ENCODE measurements at regions of chr1 and their contacts with region 1.

Region 1: GRCh38 chr1:226062558-226063223 is at the start of gene H3-3A:
- DNase-seq: peak; percentile 97
- H3K4me3 Mint-ChIP-seq: peak within 1 kb of the TSS; percentile 100
- H3K27ac Mint-ChIP-seq: peak within 1 kb of the TSS; percentile 100
- H3K4me1 Mint-ChIP-seq: peaks cover 36% of the 10 kb centered on the region
- H3K27me3 Mint-ChIP-seq: no peaks in the 10 kb centered on the region
- total RNA-seq, gene H3-3A: 416 and 426 TPM in 2 replicates

Region 2: GRCh38 chr1:224903951-224904350 is 1158.7 kb before region 1 on chr1:
- intact Hi-C with region 1: no loop called
- DNase-seq: no peak
- H3K4me3 Mint-ChIP-seq: no peak overlapping the region
- H3K27ac Mint-ChIP-seq: no peak overlapping the region
- H3K4me1 Mint-ChIP-seq: no peaks in the 10 kb centered on the region
- H3K27me3 Mint-ChIP-seq: peaks cover 9% of the 10 kb centered on the region

Region 3: DNA sequence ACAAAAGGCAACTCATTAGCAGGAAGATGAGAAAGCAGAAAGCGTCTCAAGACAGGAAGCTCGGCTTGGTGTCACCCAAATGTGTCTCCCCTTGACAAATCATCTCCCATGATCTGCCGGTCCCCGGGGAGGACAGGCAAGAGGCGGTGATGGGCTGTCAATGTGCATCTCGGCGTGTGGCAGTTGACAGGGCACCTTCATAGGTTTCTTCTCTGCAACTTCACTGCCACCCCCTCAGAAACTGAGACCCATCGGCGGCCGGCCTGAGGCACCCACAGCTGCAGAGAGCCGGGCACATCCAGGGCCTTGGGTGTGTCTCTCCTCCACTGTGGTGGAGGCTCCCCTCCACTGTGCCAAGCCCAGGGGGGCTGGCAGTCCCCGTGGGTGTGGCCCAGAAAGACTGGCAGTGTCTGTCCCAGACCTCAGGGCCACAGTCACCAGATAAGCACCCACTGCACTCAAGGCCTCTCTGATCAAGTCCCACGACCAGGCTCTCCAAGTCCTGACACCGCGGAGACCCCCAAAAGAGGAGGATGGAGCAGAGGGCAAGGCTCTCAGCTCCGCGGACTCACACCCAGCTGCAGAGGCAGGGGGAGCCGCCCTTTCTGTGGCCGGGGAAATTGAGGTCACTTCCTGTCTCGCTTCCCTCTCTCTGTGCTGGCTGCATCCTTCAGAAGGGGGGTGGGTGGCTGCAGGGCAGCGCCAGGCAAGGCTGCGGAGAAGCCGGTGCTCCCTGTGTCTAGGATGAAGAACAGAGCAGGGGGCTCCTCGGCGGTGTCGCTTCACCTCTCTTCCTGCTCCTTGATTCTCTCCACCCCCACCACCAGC is 595.3 kb before region 1 on chr1:
- intact Hi-C with region 1: loop called (anchors 2 kb)
- DNase-seq: peak; percentile 80
- H3K4me3 Mint-ChIP-seq: peak overlapping the region; percentile 92
- H3K27ac Mint-ChIP-seq: peak overlapping the region; percentile 95
- H3K4me1 Mint-ChIP-seq: peaks cover 45% of the 10 kb centered on the region
- H3K27me3 Mint-ChIP-seq: no peaks in the 10 kb centered on the region

Region 4: DNA sequence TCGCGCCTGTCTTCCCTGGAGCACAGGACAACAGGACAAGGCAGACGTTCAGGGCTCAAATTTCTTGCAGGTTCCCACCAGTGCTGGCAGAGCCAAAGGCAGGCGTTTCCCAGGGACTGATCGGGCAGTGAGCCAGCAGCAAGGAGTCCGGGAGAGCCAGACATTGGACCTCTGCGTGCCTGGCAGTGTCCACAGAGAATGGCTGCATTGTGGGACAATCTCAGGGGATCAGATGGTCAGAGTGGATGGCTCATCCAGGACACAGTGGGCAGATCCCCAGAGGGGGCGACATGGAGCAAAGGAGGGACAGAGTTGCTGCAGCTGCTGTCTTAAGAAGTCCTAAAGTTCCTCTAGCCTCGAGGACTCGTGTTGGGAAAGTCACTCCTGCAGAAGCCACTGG is 185.1 kb before region 1 on chr1:
- intact Hi-C with region 1: no loop called
- DNase-seq: no peak
- H3K4me3 Mint-ChIP-seq: peak overlapping the region; percentile 55
- H3K27ac Mint-ChIP-seq: no peak overlapping the region
- H3K4me1 Mint-ChIP-seq: peaks cover 45% of the 10 kb centered on the region
- H3K27me3 Mint-ChIP-seq: no peaks in the 10 kb centered on the region

Region 5: GRCh38 chr1:225999227-225999911 is 63.3 kb before region 1 on chr1 and contains the start of gene SDE2:
- intact Hi-C with region 1: loop called (anchors 1 kb)
- DNase-seq: peak; percentile 99
- H3K4me3 Mint-ChIP-seq: peak within 1 kb of the TSS; percentile 100
- H3K27ac Mint-ChIP-seq: peak within 1 kb of the TSS; percentile 100
- H3K4me1 Mint-ChIP-seq: peaks cover 76% of the 10 kb centered on the region
- H3K27me3 Mint-ChIP-seq: no peaks in the 10 kb centered on the region
- total RNA-seq, gene SDE2: 28.2 and 28.4 TPM in 2 replicates

Region 6: DNA sequence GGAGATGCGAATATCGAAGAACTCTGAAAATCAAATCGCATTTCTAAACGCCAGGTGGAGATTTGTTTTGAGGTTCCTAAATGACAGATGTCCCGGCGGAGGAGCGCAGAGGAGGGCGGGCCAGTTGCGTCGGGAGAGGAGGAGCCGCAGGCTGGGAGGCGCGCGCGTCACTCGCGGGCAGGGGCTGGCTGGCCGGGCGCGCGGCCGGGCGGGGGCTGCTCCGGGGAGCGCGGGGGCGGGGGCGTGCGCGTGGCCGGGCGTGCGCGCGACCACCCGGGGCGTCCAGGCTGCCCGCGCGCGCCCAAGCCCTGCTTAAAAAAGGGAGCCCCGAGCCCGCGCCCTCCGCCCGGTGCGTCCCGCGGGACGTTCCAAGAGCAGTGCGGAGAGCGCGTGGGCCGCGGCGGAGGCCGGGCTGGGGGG is 47.1 kb after region 1 on chr1:
- intact Hi-C with region 1: loop called (anchors 1 kb)
- DNase-seq: peak; percentile 75
- H3K4me3 Mint-ChIP-seq: peak overlapping the region; percentile 90
- H3K27ac Mint-ChIP-seq: peak overlapping the region; percentile 88
- H3K4me1 Mint-ChIP-seq: peaks cover 25% of the 10 kb centered on the region
- H3K27me3 Mint-ChIP-seq: peaks cover 9% of the 10 kb centered on the region

Region 7: DNA sequence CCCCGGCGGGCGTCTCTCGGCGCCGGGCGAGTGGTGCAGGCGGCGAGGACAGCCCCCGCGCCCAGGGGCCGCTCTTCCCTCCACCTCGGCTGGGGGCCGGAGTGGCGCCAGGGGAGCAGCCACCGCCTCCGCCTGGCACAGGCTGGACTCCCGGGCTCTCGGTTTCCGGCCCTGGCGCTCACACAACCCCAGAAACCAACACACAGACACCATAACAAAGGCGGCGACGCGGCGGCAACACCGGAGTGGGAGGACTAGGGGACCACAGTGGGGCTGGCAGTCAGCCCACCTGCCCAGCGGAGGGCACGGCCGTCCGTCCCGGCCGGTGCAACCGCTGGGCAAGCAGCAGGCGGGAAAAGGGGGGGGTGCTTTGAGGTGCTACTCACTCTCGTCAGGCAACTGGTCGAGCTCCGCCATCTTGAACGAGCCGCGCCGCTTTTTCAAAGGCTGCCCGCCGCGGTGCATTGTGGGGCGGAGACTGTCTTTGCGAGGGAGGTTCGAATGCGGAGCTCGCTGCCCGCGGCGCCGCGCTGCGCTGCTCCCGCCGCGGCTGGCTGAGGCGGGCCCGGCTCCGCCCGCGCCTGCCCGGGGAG is 246.1 kb after region 1 on chr1 and contains the start of gene LIN9:
- intact Hi-C with region 1: loop called (anchors 2 kb)
- DNase-seq: peak; percentile 90
- H3K4me3 Mint-ChIP-seq: peak within 1 kb of the TSS; percentile 95
- H3K27ac Mint-ChIP-seq: peak within 1 kb of the TSS; percentile 86
- H3K4me1 Mint-ChIP-seq: peaks cover 50% of the 10 kb centered on the region
- H3K27me3 Mint-ChIP-seq: peaks cover 16% of the 10 kb centered on the region
- total RNA-seq, gene LIN9: 11.7 and 12.1 TPM in 2 replicates

Region 8: DNA sequence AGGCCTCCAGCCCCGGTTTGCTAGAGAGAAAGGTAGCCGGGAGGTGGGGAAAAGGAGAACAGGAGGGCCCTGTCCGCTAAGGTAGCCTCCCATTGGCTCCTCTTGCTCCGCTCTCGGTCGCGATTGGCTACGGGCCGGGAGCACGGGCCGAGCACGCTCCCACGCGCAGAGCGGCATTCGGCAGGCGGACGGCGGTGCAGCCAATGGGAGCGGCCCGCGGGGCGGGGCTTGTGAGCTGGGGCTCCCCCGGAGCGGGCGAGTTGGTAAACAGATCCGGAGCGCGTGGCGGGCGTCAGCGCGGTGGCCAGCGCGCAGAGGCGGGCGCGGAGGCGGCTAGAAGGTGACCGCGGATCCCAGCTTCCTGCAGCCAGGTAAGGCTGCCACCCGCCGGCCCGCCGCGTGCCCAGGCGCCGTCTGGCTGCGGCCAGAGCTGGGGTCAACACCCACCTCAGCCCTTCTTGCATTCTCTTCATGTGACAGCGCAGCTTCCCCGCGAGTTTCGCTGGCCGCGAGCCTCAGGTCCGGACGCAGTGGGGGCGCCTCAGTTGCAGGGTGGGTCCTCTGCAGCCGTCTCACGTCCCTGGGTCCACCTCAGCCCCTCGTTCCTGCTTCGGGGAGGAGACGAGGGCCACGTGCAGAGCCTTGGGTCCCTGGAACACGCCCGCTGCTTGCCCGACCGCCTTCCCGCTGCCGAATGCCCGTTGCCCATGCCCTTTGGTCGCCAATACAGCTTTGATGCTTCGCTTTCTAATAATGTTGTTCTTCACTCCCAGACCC is 877.5 kb after region 1 on chr1 and contains the start of gene COQ8A:
- intact Hi-C with region 1: loop called (anchors 5 kb)
- DNase-seq: peak; percentile 100
- H3K4me3 Mint-ChIP-seq: peak within 1 kb of the TSS; percentile 89
- H3K27ac Mint-ChIP-seq: peak within 1 kb of the TSS; percentile 97
- H3K4me1 Mint-ChIP-seq: peaks cover 41% of the 10 kb centered on the region
- H3K27me3 Mint-ChIP-seq: no peaks in the 10 kb centered on the region
- total RNA-seq, gene COQ8A: 33.1 and 33.8 TPM in 2 replicates

Measured in activated T-helper 1 cell treated with anti-CD3 and anti-CD28 coated beads, Interleukin-12 subunit alpha, Interleukin-12 subunit beta, Interleukin-2, Interleukin-4 antibody, amounts not matched to agents 30 ng/mL and 10 ng/mL and 1 ng/mL, durations not matched to agents 14 hours and 24 hours and 36 hours (primary cell).